ENCODE measurements at regions of chr7 and their contacts with region 1.

Region 1: GRCh38 chr7:100407285-100408180 is 21.0 kb downstream of the ZCWPW1 start:
- DNase-seq: peak; percentile 84
- ATAC-seq: peak; percentile 87
- H3K4me3 ChIP-seq: no peak overlapping the region
- H3K27ac ChIP-seq: no peak overlapping the region
- H3K4me1 ChIP-seq: peaks cover 10% of the 10 kb centered on the region; the same call in 1 of the 2 replicates
- H3K27me3 ChIP-seq: no peaks in the 10 kb centered on the region
- CTCF ChIP-seq: peak; percentile 72

Region 2: DNA sequence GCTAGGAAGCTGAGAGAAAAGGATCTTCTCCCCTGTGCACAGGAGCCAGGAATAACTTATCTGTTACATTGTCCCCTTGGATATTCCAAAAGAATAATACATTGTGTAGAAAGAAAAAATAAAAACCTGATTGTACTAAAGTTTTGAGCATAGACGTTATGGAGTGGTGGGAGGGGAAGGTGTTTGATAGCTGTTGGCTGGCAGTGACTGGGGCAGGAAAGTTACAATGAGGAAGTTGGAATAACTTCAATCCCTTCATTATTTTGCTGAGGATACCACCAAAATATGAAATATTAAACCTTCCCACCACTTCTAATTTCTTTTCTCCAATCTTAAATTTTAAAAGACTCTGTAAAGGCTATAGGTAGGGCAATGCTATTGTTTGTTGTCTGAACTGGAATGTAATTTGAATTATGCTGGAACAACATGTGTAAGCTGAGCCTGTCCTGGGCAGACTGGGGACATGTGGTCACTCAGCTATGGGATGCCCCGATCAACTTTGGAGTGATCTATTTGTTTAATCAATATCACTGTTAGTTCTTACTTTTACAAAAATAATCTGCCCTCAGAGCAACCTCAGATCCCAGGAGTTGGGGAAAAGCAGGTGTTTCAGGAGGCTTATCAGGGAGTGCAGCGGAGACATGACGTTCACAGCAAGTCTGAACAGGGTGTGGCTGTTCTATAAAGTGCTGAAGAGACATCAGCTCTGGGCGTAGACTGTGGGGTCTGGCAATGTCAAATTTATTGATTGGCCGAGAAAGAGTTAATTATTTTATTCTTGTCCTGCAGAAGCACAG is 558.9 kb before region 1 on chr7:
- CTCF ChIA-PET with region 1: no interaction called
- POLR2A ChIA-PET with region 1: no interaction called
- intact Hi-C with region 1: no loop called
- DNase-seq: no peak
- ATAC-seq: no peak
- H3K4me3 ChIP-seq: no peak overlapping the region
- H3K27ac ChIP-seq: no peak overlapping the region
- H3K4me1 ChIP-seq: no peaks in the 10 kb centered on the region
- H3K27me3 ChIP-seq: peaks cover 31% of the 10 kb centered on the region; the same call in 1 of the 2 replicates
- CTCF ChIP-seq: no peak

Region 3: DNA sequence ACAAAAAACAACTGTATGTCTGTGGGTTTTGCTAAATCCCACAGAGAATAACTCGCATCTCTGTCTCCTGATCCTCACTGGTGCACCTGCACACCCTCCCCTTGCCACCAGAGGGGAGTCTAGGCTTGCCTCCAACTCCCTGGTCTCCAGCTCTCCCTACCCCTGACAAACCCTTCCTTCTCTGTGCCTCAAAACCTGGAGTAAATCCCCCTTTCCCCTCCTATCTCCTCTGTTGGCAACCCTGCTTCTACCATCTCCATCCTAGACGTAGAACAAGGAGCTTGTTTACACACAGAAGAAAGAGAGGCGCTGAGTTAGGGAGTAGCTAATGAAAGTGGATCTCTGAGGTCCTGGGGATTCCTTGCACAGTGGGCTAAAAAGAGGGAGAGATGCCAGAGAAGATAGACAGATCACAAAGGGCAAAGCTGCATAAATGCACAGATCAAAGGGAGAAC is 274.8 kb before region 1 on chr7:
- CTCF ChIA-PET with region 1: interaction called, 7 read pairs
- POLR2A ChIA-PET with region 1: no interaction called
- intact Hi-C with region 1: loop called (anchors 5 kb)
- DNase-seq: peak; percentile 68
- ATAC-seq: peak; percentile 80
- H3K4me3 ChIP-seq: no peak overlapping the region
- H3K27ac ChIP-seq: no peak overlapping the region
- H3K4me1 ChIP-seq: 0 out of 2 replicates have a peak, but pooled peaks cover 4% of the 10 kb centered on the region
- H3K27me3 ChIP-seq: no peaks in the 10 kb centered on the region
- CTCF ChIP-seq: peak; percentile 87

Region 4: DNA sequence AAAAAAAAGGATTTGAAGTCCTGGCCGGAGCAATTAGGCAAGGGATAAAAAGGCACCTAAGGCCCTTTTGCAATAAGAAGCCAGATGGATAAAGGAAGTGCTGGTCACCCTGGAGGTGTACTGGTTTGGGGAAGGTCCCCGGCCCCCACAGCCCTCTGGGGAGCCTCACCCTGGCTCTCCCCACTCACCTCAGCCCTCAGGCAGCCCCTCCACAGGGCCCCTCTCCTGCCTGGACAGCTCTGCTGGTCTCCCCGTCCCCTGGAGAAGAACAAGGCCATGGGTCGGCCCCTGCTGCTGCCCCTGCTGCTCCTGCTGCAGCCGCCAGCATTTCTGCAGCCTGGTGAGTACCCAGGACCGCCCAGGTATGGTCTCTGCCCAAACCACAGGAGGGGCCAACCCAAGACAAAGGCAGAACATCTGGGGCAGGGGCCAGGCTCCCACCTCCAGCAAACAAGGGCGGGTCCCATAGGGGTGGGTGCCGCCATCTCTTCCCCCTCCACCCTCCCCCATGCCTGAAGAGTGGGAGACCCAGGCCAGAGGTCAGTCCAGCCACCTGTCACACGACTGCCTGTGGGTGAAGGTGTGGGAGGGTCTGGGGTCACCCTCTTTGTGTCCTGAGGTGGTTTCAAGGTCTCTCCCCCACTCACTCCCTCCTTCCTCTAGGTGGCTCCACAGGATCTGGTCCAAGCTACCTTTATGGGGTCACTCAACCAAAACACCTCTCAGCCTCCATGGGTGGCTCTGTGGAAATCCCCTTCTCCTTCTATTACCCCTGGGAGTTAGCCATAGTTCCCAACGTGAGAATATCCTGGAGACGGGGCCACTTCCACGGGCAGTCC is 49.3 kb before region 1 on chr7 and contains the start of gene PILRB:
- CTCF ChIA-PET with region 1: no interaction called
- POLR2A ChIA-PET with region 1: no interaction called
- intact Hi-C with region 1: loop called (anchors 10 kb)
- DNase-seq: no peak
- ATAC-seq: no peak; the same call in 1 of the 2 replicates
- H3K4me3 ChIP-seq: no peak within 1 kb of the TSS
- H3K27ac ChIP-seq: no peak within 1 kb of the TSS
- H3K4me1 ChIP-seq: no peaks in the 10 kb centered on the region
- H3K27me3 ChIP-seq: no peaks in the 10 kb centered on the region
- CTCF ChIP-seq: no peak
- total RNA-seq, gene PILRB: 71.6 and 74.1 TPM in 2 replicates

Region 5: DNA sequence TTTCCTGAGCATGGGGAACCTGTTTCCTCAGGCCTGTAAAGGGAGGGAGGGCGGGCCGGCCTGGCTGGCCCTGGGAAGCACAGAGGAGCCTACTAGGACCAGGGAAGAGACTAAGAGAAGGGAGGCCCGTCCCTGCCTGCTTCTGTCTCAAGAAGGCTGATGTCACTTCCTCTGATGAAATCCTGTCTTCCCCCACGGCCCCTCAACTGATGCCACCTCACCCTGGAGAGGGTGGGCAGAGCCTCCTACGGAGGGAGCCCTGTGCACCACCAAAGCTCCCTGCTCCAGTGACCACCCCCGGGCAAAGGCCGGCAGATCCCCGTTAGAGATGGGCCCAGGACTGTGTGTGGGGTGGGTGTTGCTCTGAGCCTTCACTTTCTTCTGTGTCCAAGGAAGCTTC is 35.3 kb before region 1 on chr7:
- CTCF ChIA-PET with region 1: no interaction called
- POLR2A ChIA-PET with region 1: no interaction called
- intact Hi-C with region 1: loop called (anchors 1 kb)
- DNase-seq: no peak
- ATAC-seq: no peak; the same call in 1 of the 2 replicates
- H3K4me3 ChIP-seq: no peak overlapping the region
- H3K27ac ChIP-seq: no peak overlapping the region
- H3K4me1 ChIP-seq: no peaks in the 10 kb centered on the region
- H3K27me3 ChIP-seq: no peaks in the 10 kb centered on the region
- CTCF ChIP-seq: no peak

Region 6: GRCh38 chr7:100719523-100720319 is 312.2 kb after region 1 on chr7:
- CTCF ChIA-PET with region 1: no interaction called
- POLR2A ChIA-PET with region 1: no interaction called
- intact Hi-C with region 1: no loop called
- DNase-seq: peak; percentile 16
- ATAC-seq: peak; percentile 45; the same call in 1 of the 2 replicates
- H3K4me3 ChIP-seq: no peak overlapping the region
- H3K27ac ChIP-seq: no peak overlapping the region
- H3K4me1 ChIP-seq: no peaks in the 10 kb centered on the region
- H3K27me3 ChIP-seq: no peaks in the 10 kb centered on the region
- CTCF ChIP-seq: peak; percentile 32

Measured in PC-3 (cell line).